ENCODE measurements at regions of chr12 and their contacts with region 1.

Region 1: DNA sequence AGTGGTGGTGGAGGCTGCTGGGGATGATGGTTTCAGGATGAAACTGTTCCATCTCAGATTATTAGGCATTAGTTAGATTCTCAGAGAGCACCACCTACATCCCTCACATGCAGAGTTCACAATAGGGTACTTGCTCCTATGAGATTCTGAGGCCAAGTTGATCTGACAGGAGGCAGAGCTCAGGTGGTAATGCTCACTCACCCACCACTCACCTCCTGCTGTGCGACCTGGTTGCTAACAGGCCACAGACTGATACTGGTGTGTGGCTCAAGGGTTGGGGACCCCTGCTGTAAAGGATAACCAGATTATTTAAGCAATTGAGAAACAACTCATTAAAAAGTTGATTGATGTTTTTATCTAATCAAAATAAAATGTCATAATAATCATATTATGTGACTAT is 248.5 kb downstream of the RERGL start:
- DNase-seq: no peak
- H3K4me3 Mint-ChIP-seq: no peak overlapping the region
- H3K27ac Mint-ChIP-seq: no peak overlapping the region
- H3K4me1 Mint-ChIP-seq: no peaks in the 10 kb centered on the region
- H3K27me3 Mint-ChIP-seq: no peaks in the 10 kb centered on the region

Region 2: GRCh38 chr12:17763366-17763765 is 78.1 kb before region 1 on chr12:
- intact Hi-C with region 1: loop called (anchors 5 kb)
- DNase-seq: no peak
- H3K4me3 Mint-ChIP-seq: no peak overlapping the region
- H3K27ac Mint-ChIP-seq: no peak overlapping the region
- H3K4me1 Mint-ChIP-seq: no peaks in the 10 kb centered on the region
- H3K27me3 Mint-ChIP-seq: no peaks in the 10 kb centered on the region

Region 3: DNA sequence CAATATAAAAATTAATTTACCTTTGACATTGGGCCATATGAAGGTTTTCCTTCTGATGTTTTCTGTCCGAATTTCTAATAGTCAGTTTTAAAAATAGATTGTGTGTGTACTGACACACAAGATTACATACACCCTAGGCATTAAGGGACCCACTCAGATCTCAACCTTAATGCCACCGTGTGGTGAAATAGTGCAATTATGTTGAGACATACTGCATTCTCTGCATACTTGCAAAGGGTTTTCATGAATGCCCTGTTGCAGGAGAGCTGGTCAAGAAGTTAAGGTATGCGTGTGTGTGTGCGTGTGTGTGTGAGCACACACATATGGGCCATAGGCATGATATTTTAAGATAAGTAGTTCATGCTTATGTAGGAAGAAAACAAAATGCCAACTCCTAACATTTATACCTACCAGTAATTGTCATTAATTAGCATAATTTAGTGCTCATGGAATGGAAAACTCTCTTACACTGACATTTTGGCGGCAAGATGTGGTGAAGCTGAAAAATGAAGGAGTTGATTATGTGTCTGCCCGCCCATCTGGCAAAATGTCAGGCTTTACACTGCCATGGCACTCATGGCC is 478.6 kb after region 1 on chr12:
- intact Hi-C with region 1: no loop called
- DNase-seq: no peak
- H3K4me3 Mint-ChIP-seq: no peak overlapping the region
- H3K27ac Mint-ChIP-seq: no peak overlapping the region
- H3K4me1 Mint-ChIP-seq: no peaks in the 10 kb centered on the region
- H3K27me3 Mint-ChIP-seq: no peaks in the 10 kb centered on the region

Measured in activated CD4-positive, alpha-beta T cell treated with anti-CD3 and anti-CD28 coated beads, Interleukin-2, amount 10 ng/mL, durations not matched to agents 24 days and 14 days (primary cell).